Calu3 (cell line): ENCODE measurements at regions of chr3 and their contacts with region 1.

Region 1: DNA sequence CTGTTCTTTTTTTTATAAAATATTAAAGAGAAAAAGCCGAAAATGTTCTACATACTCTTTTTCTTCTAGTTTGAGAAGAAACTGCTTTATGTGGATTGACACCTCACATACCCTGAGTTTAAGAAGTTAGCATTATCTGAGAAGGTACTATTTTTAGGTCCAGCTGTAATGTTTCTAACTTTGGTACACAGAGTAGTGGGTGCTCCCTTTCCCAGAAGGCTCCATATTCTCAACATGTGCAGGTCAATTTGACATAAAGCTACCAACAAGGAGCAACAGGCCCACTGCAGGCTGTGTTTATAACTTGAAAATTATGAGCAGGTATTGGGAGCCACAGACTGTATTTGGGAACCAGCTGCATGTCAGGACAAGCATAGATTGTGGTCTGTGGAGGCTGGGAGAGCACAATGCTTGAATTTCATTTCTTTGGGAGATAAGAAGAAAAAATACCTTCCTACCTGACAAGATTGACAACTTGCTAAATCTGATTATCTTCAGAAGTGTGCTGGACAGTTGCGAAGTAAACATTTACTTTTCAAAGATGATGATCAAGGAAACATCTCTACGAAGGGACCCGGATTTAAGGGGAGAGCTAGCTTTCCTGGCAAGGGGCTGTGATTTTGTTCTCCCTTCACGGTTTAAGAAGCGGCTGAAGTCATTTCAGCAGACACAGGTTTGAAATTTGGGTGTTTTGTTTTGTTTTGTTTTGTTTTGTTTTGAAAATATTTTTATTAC is 57.2 kb downstream of the PPP2R3A start:
- DNase-seq: no peak
- H3K4me3 Mint-ChIP-seq: no peak overlapping the region
- H3K27ac Mint-ChIP-seq: no peak overlapping the region
- H3K4me1 Mint-ChIP-seq: peaks cover 10% of the 10 kb centered on the region
- H3K27me3 Mint-ChIP-seq: no peaks in the 10 kb centered on the region
- CTCF ChIP-seq: no peak

Region 2: DNA sequence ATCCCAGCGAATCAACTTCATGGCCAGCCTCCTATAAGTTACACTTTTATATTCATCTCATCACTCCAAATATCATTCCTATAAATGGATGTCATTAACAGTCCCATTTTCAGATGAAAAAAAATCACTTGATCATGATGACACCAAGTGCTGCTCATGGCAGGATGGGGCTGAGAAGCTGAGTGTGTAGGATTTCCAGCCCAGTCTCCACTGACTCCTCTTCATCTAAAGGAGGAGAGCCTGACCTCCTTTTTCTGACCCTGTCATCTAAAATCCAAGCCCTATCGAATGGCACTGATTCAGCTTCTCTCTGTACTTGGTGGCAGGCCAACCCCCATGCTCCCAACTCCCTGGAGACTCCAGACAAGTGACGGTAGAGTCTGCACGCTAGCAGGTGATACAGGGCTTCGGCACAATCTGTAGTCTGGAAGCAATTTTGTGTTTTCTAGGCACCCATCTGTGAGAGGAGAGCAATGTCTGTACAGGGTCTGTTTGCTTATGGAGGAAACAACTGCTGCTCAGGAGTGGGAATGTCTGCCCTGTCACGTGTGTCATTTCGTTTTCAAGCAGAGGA is 1124.4 kb before region 1 on chr3:
- CTCF ChIA-PET with region 1: no interaction called
- intact Hi-C with region 1: no loop called
- DNase-seq: no peak
- H3K4me3 Mint-ChIP-seq: no peak overlapping the region
- H3K27ac Mint-ChIP-seq: no peak overlapping the region
- H3K4me1 Mint-ChIP-seq: no peaks in the 10 kb centered on the region
- H3K27me3 Mint-ChIP-seq: peaks cover 65% of the 10 kb centered on the region
- CTCF ChIP-seq: no peak

Region 3: GRCh38 chr3:135752846-135753245 is 269.9 kb before region 1 on chr3:
- CTCF ChIA-PET with region 1: no interaction called
- intact Hi-C with region 1: no loop called
- DNase-seq: peak; percentile 29
- H3K4me3 Mint-ChIP-seq: no peak overlapping the region
- H3K27ac Mint-ChIP-seq: no peak overlapping the region
- H3K4me1 Mint-ChIP-seq: no peaks in the 10 kb centered on the region
- H3K27me3 Mint-ChIP-seq: peaks cover 90% of the 10 kb centered on the region
- CTCF ChIP-seq: no peak

Region 4: DNA sequence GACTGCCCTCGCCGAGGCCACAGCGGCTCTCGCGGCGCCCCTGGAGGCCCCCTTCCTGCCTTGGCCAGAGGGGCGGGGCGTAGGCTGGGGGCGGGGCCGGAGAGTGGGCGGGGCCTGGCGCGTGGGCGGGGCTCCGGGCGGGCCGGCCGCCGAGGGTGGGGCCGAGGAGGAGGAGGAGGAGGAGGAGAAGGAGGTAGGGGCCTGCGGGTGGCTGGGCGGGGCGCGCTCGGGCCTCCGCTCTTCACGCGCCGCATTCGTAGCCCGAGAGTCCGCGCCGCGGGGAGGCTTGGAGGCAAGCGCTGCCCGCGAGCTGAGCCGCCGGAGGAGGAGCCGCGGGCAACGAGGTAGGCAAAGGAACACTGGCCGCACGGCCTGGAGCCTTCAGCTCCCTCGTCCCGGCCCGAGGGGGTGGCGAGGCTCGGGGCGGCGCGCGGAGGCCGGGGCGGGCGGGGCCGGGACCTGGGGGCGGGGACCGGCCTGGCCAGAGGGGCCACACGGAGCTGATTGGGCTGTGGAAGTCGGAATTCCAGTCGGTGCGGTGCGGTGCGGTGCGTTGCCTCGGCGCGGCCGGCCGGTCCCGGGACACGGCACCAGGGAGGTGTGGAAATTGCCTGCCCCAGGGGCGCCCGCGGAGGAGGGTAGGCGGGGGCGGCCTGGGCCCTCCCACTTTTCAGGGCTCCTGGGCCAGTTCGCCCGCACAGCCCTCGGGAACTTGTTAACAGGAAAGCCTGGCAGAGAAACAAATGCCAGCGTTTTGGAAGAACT is 57.0 kb before region 1 on chr3 and contains the start of gene PPP2R3A:
- CTCF ChIA-PET with region 1: interaction called, 5 read pairs
- intact Hi-C with region 1: loop called (anchors 5 kb)
- DNase-seq: peak; percentile 96
- H3K4me3 Mint-ChIP-seq: peak within 1 kb of the TSS; percentile 76
- H3K27ac Mint-ChIP-seq: peak within 1 kb of the TSS; percentile 73
- H3K4me1 Mint-ChIP-seq: peaks cover 39% of the 10 kb centered on the region
- H3K27me3 Mint-ChIP-seq: no peaks in the 10 kb centered on the region
- CTCF ChIP-seq: no peak
- total RNA-seq, gene PPP2R3A: 45.6 and 64.8 TPM in 2 replicates